MCF 10A (cell line): ENCODE measurements at regions of chr18 and their contacts with region 1.

Region 1: GRCh38 chr18:21191596-21192307 is 50.3 kb upstream of the GREB1L start:
- DNase-seq: peak; percentile 65
- H3K4me3 Mint-ChIP-seq: no peak overlapping the region
- H3K27ac Mint-ChIP-seq: no peak overlapping the region
- H3K4me1 Mint-ChIP-seq: peaks cover 4% of the 10 kb centered on the region
- H3K27me3 Mint-ChIP-seq: peaks cover 24% of the 10 kb centered on the region
- CTCF ChIP-seq: peak; percentile 39

Region 2: DNA sequence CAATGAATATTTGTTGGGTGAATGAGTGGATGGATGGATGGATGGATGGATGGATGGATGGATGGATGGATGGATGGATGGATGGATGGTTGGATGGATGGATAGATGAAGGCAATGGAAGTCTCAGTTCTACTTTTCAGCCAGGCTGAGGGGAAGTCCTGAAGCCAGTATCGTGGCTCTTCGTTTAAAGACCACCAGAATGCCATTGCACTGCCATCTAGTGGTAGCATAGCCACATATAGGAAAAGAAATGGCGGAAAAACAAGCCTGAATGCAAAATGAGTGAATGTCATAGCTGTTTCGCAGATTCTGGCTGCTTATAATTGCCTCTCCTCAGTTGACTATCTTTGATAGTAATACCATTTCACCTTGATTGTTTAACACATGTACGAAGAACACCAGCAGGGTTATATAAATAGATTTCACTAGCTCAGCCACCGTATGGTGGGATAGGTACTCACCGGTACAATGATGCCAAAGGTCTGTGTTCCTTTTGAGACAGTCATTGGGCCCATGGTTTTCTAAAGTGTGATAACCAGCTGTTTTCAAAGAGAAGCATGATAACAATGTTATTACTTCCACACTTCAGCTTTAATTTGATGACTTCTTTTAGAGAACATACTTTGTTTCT is 12.0 kb before region 1 on chr18:
- CTCF ChIA-PET with region 1: interaction called, 81 read pairs
- POLR2A ChIA-PET with region 1: no interaction called
- intact Hi-C with region 1: no loop called
- DNase-seq: peak; percentile 70
- H3K4me3 Mint-ChIP-seq: no peak overlapping the region
- H3K27ac Mint-ChIP-seq: no peak overlapping the region
- H3K4me1 Mint-ChIP-seq: no peaks in the 10 kb centered on the region
- H3K27me3 Mint-ChIP-seq: no peaks in the 10 kb centered on the region
- CTCF ChIP-seq: peak; percentile 61

Region 3: DNA sequence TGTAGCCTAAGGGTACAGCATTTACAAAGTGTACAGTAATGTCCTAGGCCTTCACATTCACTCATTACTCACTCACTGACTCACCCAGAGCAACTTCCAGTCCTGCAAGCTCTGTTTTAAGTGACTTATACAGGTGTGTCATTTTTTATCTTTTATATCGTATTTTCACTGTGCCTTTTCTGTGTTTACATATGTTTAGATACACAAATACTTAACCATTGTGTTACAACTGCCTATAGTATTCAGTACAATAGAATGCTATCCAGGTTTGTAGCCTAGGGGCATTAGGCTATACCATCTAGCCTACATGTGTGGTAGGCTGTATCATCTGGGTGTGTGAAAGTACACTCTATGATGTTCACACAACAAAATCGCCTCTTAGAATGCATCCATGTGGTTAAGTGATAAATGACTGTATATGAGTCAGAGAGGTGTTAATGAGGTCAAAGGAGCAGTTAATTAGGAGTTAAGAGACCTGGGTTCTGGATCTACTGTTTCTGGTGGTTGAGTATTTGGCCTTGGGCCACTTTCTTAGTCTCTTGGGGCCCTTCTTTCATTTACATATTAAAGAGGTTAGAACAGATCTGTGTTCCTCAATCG is 199.4 kb after region 1 on chr18:
- CTCF ChIA-PET with region 1: interaction called, 4 read pairs
- POLR2A ChIA-PET with region 1: no interaction called
- intact Hi-C with region 1: loop called (anchors 1 kb)
- DNase-seq: peak; percentile 84
- H3K4me3 Mint-ChIP-seq: peak overlapping the region; percentile 23
- H3K27ac Mint-ChIP-seq: peak overlapping the region; percentile 51
- H3K4me1 Mint-ChIP-seq: peaks cover 16% of the 10 kb centered on the region
- H3K27me3 Mint-ChIP-seq: no peaks in the 10 kb centered on the region
- CTCF ChIP-seq: no peak

Region 4: DNA sequence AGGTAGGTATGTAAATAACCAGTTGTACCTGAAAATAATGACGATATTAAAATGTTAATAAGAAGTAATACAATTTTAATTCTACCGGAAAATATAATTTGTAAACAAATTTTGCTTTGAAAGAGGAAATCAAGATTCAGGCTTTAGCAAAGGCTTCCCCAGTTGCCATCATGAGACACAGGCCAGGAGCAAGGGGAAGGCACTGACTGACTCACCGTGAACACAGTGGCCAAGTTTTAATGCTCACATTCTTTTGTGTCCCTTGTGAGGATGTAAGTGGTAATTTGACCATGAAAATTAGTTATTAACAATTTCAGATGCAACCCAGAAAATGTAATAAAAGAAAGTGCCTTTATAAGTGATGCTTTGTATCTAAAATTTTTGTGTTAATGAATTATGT is 214.4 kb after region 1 on chr18:
- CTCF ChIA-PET with region 1: no interaction called
- POLR2A ChIA-PET with region 1: no interaction called
- intact Hi-C with region 1: no loop called
- DNase-seq: peak; percentile 15
- H3K4me3 Mint-ChIP-seq: no peak overlapping the region
- H3K27ac Mint-ChIP-seq: no peak overlapping the region
- H3K4me1 Mint-ChIP-seq: no peaks in the 10 kb centered on the region
- H3K27me3 Mint-ChIP-seq: no peaks in the 10 kb centered on the region
- CTCF ChIP-seq: no peak

Region 5: GRCh38 chr18:21450913-21451312 is 259.2 kb after region 1 on chr18:
- CTCF ChIA-PET with region 1: interaction called, 192 read pairs
- POLR2A ChIA-PET with region 1: no interaction called
- intact Hi-C with region 1: no loop called
- DNase-seq: no peak
- H3K4me3 Mint-ChIP-seq: no peak overlapping the region
- H3K27ac Mint-ChIP-seq: no peak overlapping the region
- H3K4me1 Mint-ChIP-seq: no peaks in the 10 kb centered on the region
- H3K27me3 Mint-ChIP-seq: no peaks in the 10 kb centered on the region
- CTCF ChIP-seq: no peak

Region 6: GRCh38 chr18:21851327-21851972 is 659.7 kb after region 1 on chr18:
- CTCF ChIA-PET with region 1: no interaction called
- POLR2A ChIA-PET with region 1: no interaction called
- intact Hi-C with region 1: loop called (anchors 10 kb)
- DNase-seq: peak; percentile 25
- H3K4me3 Mint-ChIP-seq: no peak overlapping the region
- H3K27ac Mint-ChIP-seq: no peak overlapping the region
- H3K4me1 Mint-ChIP-seq: no peaks in the 10 kb centered on the region
- H3K27me3 Mint-ChIP-seq: no peaks in the 10 kb centered on the region
- CTCF ChIP-seq: peak; percentile 29